Testis (tissue), 5 donors: ENCODE measurements at regions of chr3 and their contacts with region 1.

Region 1: GRCh38 chr3:53114011-53114400 is 16.2 kb downstream of the RFT1 start:
- DNase-seq: peak; percentile 91
- H3K4me3 ChIP-seq: no peak overlapping the region
- H3K27ac ChIP-seq: peak overlapping the region in 1 of 2 donors; percentile 27
- H3K4me1 ChIP-seq: peaks cover 33% of the 10 kb centered on the region
- H3K27me3 ChIP-seq: no peaks in the 10 kb centered on the region
- CTCF ChIP-seq: peak; percentile 92 to 96 (median 92)
- POLR2A ChIP-seq: no peak

Region 2: DNA sequence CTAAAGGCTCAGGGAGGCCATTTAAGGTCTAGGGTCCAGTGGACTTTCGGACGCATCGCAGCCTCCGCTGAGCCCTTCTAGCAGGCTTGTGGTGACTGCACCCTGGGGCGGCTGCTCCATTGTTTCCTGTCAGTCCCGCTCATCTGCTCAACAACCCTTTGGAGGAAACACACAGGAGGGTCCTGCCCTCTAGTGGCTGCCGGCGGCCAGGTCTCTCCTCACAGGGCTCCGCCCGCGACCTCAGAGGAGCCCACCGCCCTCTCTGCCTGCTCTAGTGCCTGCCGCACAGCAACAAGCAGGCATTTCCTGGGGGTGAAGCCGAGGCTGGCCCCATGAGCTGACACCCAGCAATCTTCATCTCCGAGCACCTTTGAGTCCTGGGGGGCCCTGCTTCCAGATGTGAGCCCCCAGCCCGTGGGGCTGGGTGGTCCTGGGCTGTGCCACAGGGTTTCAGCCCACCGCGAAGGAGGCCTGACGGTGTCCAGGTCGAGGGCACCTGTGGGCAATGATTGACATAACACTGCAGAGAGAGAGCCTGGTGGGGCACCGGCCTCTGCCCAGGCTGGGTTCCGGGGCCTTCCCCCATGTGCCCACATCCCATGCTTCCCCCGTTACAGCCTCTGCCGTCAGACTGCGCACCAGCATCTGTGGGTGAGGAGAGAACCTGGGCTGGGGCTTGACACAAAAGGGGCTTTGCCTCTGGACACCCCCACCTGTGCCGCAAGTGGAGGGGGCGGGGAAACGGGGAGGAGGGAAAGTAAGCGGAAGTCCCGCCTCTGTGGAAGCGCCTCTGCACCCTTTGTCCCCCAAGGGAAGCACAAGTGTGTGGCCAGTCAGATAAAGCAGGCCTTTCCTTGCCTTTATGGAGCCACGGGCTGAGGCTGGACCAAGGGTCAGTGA is 41.1 kb before region 1 on chr3:
- intact Hi-C with region 1: no loop called
- DNase-seq: peak; percentile 86
- H3K4me3 ChIP-seq: peak overlapping the region; percentile 56 to 72
- H3K27ac ChIP-seq: peak overlapping the region in 1 of 2 donors; percentile 18
- H3K4me1 ChIP-seq: peaks cover 12% of the 10 kb centered on the region
- H3K27me3 ChIP-seq: no peaks in the 10 kb centered on the region
- CTCF ChIP-seq: peak; percentile 81 to 88 (median 83)
- POLR2A ChIP-seq: no peak

Region 3: GRCh38 chr3:53195602-53196574 is 81.9 kb after region 1 on chr3:
- intact Hi-C with region 1: loop called (anchors 5 kb)
- DNase-seq: peak; percentile 61
- H3K4me3 ChIP-seq: no peak overlapping the region
- H3K27ac ChIP-seq: no peak overlapping the region
- H3K4me1 ChIP-seq: peaks cover 6% of the 10 kb centered on the region
- H3K27me3 ChIP-seq: no peaks in the 10 kb centered on the region
- CTCF ChIP-seq: peak; percentile 95 to 100 (median 98)
- POLR2A ChIP-seq: no peak